PC-3 (cell line): ENCODE measurements at regions of chr2 and their contacts with region 1.

Region 1: DNA sequence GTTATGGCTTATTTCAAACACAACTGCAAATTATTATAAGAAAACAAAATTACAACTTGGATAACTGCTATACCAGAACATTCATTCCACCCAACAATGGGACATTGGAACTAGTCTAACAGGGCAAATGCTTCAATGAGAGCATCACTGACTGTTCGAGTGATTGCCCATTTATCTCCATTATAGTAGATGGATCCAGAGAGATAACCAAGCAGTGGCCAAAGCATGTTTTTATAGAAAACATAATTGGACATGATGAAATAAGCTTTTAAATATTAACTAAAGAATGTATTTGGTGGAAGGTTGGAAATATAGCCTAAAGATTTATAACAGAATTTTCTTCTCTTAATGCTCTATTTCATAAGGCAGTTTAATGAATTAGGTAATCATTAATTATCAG is 634.8 kb downstream of the NUP35 start:
- DNase-seq: no peak
- ATAC-seq: no peak
- H3K4me3 ChIP-seq: no peak overlapping the region
- H3K27ac ChIP-seq: no peak overlapping the region
- H3K4me1 ChIP-seq: no peaks in the 10 kb centered on the region
- H3K27me3 ChIP-seq: no peaks in the 10 kb centered on the region
- CTCF ChIP-seq: no peak

Region 2: GRCh38 chr2:183799761-183800160 is 40.7 kb after region 1 on chr2:
- CTCF ChIA-PET with region 1: no interaction called
- POLR2A ChIA-PET with region 1: no interaction called
- intact Hi-C with region 1: loop called (anchors 2 kb)
- DNase-seq: peak; percentile 75
- ATAC-seq: peak; percentile 99
- H3K4me3 ChIP-seq: no peak overlapping the region
- H3K27ac ChIP-seq: peak overlapping the region; percentile 41
- H3K4me1 ChIP-seq: peaks cover 17% of the 10 kb centered on the region
- H3K27me3 ChIP-seq: no peaks in the 10 kb centered on the region
- CTCF ChIP-seq: no peak